Left cardiac atrium (tissue), 4 donors: ENCODE measurements at regions of chr16 and their contacts with region 1.

Region 1: DNA sequence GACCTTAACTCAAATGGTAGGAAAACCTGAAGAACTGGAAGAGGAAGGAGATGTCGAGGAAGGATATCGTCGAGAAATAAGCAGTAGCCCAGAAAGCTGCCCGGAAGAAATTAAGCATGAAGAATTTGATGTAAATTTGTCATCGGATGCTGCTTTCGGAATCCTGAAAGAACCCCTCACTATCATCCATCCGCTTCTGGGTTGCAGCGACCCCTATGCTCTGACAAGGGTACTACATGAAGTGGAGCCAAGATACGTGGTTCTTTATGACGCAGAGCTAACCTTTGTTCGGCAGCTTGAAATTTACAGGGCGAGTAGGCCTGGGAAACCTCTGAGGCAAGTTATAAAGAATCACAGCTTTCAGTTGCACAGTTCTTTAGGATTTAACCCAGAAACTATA is 15.5 kb downstream of the ERCC4 start:
- DNase-seq: no peak
- ATAC-seq: no peak

Region 2: DNA sequence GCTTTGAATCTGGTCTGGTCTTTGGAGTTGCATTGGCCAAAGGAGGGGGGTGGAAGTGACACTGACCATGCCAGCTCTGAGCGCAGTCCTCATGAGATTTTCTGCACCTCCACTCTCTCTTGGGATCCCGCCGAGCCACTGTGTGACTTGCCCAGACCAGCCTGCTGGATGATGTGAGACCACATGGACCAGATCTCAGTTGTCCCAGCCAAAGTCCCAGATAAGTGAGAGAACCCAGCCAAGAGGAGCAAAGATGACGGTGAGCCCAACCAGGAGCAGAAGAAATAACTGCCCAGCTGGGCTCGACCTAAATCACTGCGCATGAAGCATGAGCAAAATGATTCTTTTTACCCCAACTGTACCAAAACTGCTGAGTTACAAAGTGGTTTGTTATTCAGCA is 111.9 kb before region 1 on chr16:
- intact Hi-C with region 1: no loop called
- DNase-seq: no peak
- ATAC-seq: no peak

Region 3: DNA sequence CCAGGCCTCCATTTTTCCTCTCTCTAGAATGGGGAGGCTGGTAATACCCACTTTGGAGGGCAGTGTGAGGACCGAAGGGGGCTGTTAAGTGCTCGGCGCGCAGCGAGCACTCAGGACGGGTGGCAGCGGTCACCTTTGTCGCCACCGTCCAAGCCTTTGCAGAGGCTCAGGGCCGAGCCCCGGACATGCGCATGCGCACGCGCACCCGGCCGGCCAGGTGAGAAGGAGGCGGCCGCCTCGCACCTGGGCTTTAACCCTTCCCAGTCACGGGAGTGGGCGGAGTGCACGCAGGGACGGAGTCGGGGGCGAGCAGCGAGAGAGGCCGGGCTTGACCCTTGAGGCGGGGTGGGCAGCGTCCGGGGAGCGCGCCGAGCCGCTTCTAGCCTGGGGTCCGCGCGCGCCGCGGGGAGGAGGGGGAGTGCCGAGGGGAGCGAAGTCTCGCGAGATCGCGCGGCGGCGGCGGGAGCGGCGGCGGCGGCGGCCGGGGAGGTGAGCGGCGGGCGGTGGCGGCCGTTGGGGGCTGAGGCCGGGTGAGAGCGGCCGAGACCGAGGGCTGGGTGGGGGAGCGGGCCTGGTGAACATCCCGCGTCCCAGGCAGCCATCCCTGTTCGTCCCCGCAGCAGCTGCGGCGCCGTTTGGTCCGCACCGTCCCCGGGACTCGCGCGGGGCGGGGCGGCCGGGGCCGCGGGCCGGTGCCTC is 135.6 kb after region 1 on chr16 and contains the start of gene MRTFB:
- intact Hi-C with region 1: loop called in 1 of 2 experiments (anchors 10 kb)
- DNase-seq: peak; percentile 84
- ATAC-seq: peak; percentile 94 to 97
- total RNA-seq, gene MRTFB: 34.7 to 36.8 TPM